Body of pancreas (tissue), 4 donors: ENCODE measurements at regions of chr6 and their contacts with region 1.

Region 1: DNA sequence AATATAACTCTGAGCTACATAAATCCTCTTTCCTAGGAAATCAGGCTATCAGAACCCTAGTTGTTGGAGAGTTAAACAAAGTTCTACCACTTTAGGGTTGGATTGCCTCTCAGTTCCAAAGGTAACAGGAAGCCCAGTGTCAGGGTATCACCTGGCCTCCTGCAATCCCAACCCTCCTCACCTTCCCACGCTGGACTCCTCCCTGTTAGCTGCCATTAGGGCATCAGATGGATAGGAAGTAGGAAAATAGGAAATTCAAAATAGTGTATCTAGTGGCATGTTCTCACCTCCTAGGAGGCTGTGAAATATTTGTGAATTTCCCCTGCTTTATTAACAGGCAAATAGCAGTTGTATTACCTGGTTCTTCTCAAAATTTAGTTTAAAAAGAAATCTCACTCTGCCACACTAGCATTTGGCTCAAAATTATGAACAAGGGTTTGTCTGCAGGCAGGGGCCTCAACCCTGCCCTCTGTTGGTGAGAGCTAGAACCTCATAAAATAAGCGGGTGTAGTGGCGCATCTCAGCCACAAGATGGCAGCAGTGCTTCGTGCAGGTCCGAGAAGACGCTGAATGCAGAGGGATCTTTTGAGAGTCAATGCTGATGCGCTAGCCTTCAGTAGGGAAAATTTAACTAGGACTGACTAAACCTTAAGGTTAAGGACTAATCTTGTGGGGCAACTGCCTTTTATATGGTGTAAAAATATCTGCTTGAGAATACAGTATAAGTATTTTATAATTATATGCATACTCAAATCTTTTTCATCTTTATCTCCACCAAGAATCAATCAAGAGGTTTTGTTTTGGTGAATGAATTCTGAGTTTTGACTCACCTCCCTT is 209.8 kb upstream of the KCNQ5 start:
- DNase-seq: peak; percentile 68 to 74 (median 73)
- ATAC-seq: peak; percentile 89
- H3K4me3 ChIP-seq: no peak overlapping the region
- H3K27ac ChIP-seq: no peak overlapping the region
- H3K4me1 ChIP-seq: peaks cover 9% of the 10 kb centered on the region
- H3K27me3 ChIP-seq: no peaks in the 10 kb centered on the region
- CTCF ChIP-seq: peak; percentile 100
- POLR2A ChIP-seq: no peak

Region 2: GRCh38 chr6:72649032-72649984 is 237.2 kb after region 1 on chr6:
- intact Hi-C with region 1: no loop called
- DNase-seq: no peak
- ATAC-seq: no peak
- H3K4me3 ChIP-seq: no peak overlapping the region
- H3K27ac ChIP-seq: no peak overlapping the region
- H3K4me1 ChIP-seq: no peaks in the 10 kb centered on the region
- H3K27me3 ChIP-seq: no peaks in the 10 kb centered on the region
- CTCF ChIP-seq: no peak
- POLR2A ChIP-seq: no peak

Region 3: DNA sequence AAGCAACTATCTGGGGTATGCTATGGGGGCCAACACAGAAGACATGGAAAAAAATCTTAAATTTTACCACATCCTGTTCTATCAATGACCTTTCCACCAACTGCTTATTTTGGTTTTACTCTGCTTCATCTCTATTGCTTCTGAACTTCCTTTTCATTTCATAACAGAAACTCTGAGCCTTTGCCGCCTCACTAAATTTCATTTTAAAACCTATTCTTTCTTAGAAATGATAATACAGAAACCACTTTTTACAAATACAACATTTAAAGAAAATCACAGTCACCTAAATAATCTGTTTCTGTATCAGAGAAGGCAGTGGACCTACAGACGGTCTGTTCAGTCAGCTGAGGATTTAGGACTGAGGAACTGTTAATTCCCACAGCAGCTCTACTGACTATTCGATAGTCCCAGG is 327.3 kb after region 1 on chr6:
- intact Hi-C with region 1: no loop called
- DNase-seq: no peak
- ATAC-seq: no peak
- H3K4me3 ChIP-seq: no peak overlapping the region
- H3K27ac ChIP-seq: no peak overlapping the region
- H3K4me1 ChIP-seq: no peaks in the 10 kb centered on the region
- H3K27me3 ChIP-seq: no peaks in the 10 kb centered on the region
- CTCF ChIP-seq: no peak
- POLR2A ChIP-seq: no peak

Region 4: GRCh38 chr6:73129653-73130443 is 717.8 kb after region 1 on chr6:
- intact Hi-C with region 1: loop called (anchors 10 kb)
- DNase-seq: peak; percentile 81 to 89 (median 86)
- ATAC-seq: peak; percentile 94
- H3K4me3 ChIP-seq: no peak overlapping the region
- H3K27ac ChIP-seq: no peak overlapping the region
- H3K4me1 ChIP-seq: no peaks in the 10 kb centered on the region
- H3K27me3 ChIP-seq: no peaks in the 10 kb centered on the region
- CTCF ChIP-seq: peak; percentile 85 to 95 (median 94)
- POLR2A ChIP-seq: no peak